ENCODE measurements at regions of chr18 and their contacts with region 1.

Region 1: DNA sequence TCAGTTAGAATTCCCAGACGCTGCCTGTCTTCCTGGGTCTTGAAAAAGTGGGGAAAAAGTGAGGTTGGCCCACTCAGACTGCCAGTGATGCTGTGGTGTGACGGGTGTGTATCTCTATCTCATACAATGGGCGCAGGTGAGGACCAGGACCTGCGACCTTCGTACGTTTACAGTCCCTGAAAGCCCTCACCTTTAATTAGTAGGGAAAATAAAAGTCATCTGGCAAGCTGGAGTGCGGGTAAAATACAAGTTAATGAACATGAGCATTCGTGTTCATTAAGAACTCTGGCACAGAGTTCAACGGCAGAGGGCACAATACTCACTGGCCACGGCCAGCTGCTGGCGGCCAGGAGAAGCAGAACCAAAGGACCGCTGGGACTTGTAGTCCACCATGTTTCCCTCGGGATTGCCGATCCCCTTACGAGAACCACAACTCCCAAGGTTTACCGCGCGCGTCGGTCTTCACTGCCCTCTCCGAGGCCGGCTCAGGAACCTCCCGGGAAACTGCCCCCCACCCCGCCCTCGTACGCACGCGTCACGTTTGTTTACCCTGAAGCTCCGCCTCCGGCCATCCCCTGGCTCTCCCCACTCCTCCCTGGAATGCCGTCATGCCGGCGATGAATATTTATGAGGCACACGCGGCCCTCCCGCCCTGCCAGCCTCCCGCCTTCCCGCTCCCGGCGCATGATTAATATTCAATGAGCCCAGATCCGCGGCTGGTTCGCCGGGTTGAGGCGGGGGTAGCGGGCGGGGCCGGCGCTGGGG is 488 bp upstream of the PHLPP1 start:
- DNase-seq: peak; percentile 100
- H3K4me3 ChIP-seq: peak overlapping the region; percentile 68 to 78 (median 73)
- H3K4me3 Mint-ChIP-seq: peak overlapping the region; percentile 78 to 84
- H3K27ac ChIP-seq: peak overlapping the region; percentile 70 to 71
- H3K27ac Mint-ChIP-seq: peak overlapping the region; percentile 76 to 97 (median 91)
- H3K4me1 ChIP-seq: peaks cover 15 to 36% of the 10 kb centered on the region in 2 donors
- H3K4me1 Mint-ChIP-seq: peaks cover 33% of the 10 kb centered on the region
- H3K27me3 ChIP-seq: no peaks in the 10 kb centered on the region
- H3K27me3 Mint-ChIP-seq: peaks cover 0 to 5% (median 1%) of the 10 kb centered on the region in 3 donors
- CTCF ChIP-seq: peak; percentile 63

Region 2: DNA sequence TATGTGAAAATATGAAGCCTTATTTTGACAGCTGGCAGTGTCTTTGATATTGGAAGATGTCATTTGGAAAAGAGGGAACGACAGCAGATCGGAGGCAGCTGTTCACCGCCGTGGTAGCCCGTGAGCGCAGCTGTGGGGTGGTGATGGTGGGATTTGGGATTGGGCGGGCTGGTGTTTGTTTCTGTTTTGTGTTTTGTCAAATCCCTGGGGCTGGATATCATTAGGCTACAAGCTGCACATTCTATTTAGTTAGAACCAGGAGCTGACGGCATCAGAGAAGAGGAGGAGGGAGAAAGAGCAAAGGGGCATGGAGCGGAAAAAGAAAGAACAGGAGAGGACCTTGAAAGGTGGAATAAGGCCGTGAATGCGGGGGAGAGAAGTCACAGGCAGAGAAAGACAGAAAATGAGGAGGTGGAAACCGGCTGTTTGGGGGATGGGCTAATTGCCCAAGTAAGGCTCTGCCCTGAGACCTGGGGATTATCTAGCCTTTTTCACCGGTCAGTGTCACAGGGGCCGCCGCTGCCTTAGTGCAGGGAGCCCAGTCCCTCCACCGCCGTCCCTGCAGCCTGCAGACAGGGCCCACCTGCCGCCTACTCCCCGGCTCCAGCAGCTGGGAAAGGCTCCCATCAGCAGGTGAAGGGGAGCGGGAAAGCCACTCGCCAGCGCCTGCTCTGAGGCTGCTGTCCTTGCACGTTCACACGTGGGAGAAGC is 104.0 kb before region 1 on chr18:
- intact Hi-C with region 1: no loop called
- DNase-seq: no peak
- H3K4me3 ChIP-seq: no peak overlapping the region
- H3K4me3 Mint-ChIP-seq: peak overlapping the region in 1 of 2 donors; percentile 47
- H3K27ac ChIP-seq: no peak overlapping the region
- H3K27ac Mint-ChIP-seq: peak overlapping the region in 1 of 7 donors; percentile 8
- H3K4me1 ChIP-seq: peaks cover 0 to 8% of the 10 kb centered on the region in 2 donors
- H3K4me1 Mint-ChIP-seq: peaks cover 25% of the 10 kb centered on the region
- H3K27me3 ChIP-seq: peaks cover 0 to 21% of the 10 kb centered on the region in 2 donors
- H3K27me3 Mint-ChIP-seq: peaks cover 6 to 26% (median 10%) of the 10 kb centered on the region in 3 donors
- CTCF ChIP-seq: no peak

Region 3: DNA sequence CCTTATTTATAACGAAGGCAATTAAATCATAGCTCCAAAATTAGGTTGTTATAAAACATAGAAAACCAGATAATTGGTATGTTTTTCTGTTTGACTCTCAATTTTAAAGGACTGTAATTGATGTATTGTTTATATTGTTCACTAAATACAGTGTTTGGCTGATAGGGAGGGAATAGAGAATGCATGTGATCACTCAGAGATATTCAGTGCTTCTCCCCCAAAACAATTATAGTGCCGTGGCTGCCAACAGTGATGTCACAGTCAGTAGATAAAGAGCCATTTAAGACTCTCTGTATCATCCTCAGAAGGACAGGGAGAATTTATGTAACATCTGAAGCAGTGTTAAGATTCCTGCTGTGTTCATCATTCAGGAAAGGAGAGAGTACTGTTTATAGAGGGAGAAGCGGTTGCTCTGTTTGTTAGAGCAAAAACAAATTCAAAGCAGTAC is 70.1 kb after region 1 on chr18:
- intact Hi-C with region 1: loop called in 1 of 2 experiments (anchors 10 kb)
- DNase-seq: no peak
- H3K4me3 ChIP-seq: no peak overlapping the region
- H3K4me3 Mint-ChIP-seq: no peak overlapping the region
- H3K27ac ChIP-seq: peak overlapping the region in 1 of 2 donors; percentile 71
- H3K27ac Mint-ChIP-seq: peak overlapping the region in 6 of 7 donors; percentile 4 to 71 (median 38)
- H3K4me1 ChIP-seq: peaks cover 16 to 29% of the 10 kb centered on the region in 2 donors
- H3K4me1 Mint-ChIP-seq: peaks cover 30% of the 10 kb centered on the region
- H3K27me3 ChIP-seq: no peaks in the 10 kb centered on the region
- H3K27me3 Mint-ChIP-seq: peaks cover 0 to 2% (median 0%) of the 10 kb centered on the region in 3 donors
- CTCF ChIP-seq: no peak

Region 4: GRCh38 chr18:62963507-62963906 is 248.7 kb after region 1 on chr18:
- intact Hi-C with region 1: loop called (anchors 5 kb)
- DNase-seq: no peak
- H3K4me3 ChIP-seq: no peak overlapping the region
- H3K4me3 Mint-ChIP-seq: no peak overlapping the region
- H3K27ac ChIP-seq: no peak overlapping the region
- H3K27ac Mint-ChIP-seq: no peak overlapping the region
- H3K4me1 ChIP-seq: no peaks in the 10 kb centered on the region
- H3K4me1 Mint-ChIP-seq: no peaks in the 10 kb centered on the region
- H3K27me3 ChIP-seq: no peaks in the 10 kb centered on the region
- H3K27me3 Mint-ChIP-seq: no peaks in the 10 kb centered on the region
- CTCF ChIP-seq: no peak

Region 5: GRCh38 chr18:63422087-63422809 is 707.4 kb after region 1 on chr18 and contains the start of gene VPS4B:
- intact Hi-C with region 1: loop called in 1 of 2 experiments (anchors 10 kb)
- DNase-seq: peak; percentile 100
- H3K4me3 ChIP-seq: peak within 1 kb of the TSS; percentile 85 to 94 (median 91)
- H3K4me3 Mint-ChIP-seq: peak within 1 kb of the TSS; percentile 97 to 98
- H3K27ac ChIP-seq: peak within 1 kb of the TSS; percentile 88 to 98
- H3K27ac Mint-ChIP-seq: peak within 1 kb of the TSS; percentile 97 to 99 (median 99)
- H3K4me1 ChIP-seq: peaks cover 16 to 23% of the 10 kb centered on the region in 2 donors
- H3K4me1 Mint-ChIP-seq: peaks cover 18% of the 10 kb centered on the region
- H3K27me3 ChIP-seq: no peaks in the 10 kb centered on the region
- H3K27me3 Mint-ChIP-seq: peaks cover 0 to 6% (median 0%) of the 10 kb centered on the region in 3 donors
- CTCF ChIP-seq: no peak
- polyA plus RNA-seq, gene VPS4B: 15.4 to 48.8 (median 26.7) TPM

Region 6: DNA sequence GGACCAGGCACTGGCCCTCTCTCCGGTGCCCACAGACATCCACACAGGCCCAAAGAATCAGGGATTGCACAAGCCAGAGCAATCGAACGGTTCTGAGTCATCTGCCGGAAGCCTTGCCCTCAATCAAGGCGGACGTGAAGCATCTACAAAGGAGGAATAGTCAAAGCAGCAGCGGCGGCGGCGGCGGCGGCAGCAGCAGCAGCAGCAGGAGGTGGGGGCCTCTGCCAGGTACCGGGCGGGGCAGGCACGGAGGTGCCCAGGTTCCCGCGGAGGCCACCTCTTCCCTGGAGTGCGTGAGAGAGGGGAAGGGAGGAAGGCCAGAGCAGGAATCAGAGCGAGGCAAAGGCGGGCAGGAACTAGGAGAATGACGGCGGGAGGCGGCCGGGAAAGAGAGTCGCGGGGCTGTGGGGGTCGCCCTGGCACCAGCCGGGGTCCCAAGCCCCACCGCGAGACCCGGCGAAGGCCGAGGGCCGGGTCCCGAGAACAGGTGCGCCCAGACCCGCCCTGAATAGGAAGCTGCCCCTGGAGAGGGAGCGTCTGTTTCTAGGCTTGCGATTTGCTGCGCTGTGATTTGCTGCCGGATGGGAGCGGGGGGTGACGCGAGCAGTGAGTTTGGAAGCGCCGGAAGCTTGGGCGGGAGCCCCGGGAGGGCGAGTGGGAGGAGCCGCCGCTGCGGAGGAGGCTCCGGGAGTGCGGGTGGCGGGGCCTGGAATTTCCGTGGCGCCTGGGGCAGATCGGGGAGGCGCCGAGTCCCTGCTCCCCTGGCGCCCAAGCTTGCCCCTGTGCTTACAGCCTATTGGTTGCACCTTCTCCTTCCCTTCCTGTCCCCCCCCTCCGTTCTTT is 1255.3 kb after region 1 on chr18 and contains the start of gene SERPINB8:
- intact Hi-C with region 1: loop called in 1 of 2 experiments (anchors 10 kb)
- DNase-seq: peak; percentile 92 to 97 (median 96)
- H3K4me3 ChIP-seq: peak within 1 kb of the TSS; percentile 55 to 94 (median 81)
- H3K4me3 Mint-ChIP-seq: peak within 1 kb of the TSS; percentile 91 to 98
- H3K27ac ChIP-seq: peak within 1 kb of the TSS; percentile 95 to 98
- H3K27ac Mint-ChIP-seq: peak within 1 kb of the TSS; percentile 95 to 99 (median 98)
- H3K4me1 ChIP-seq: peaks cover 64 to 67% of the 10 kb centered on the region in 2 donors
- H3K4me1 Mint-ChIP-seq: peaks cover 82% of the 10 kb centered on the region
- H3K27me3 ChIP-seq: no peaks in the 10 kb centered on the region
- H3K27me3 Mint-ChIP-seq: peaks cover 0 to 2% (median 0%) of the 10 kb centered on the region in 3 donors
- CTCF ChIP-seq: no peak
- polyA plus RNA-seq, gene SERPINB8: 30.3 to 141 (median 115) TPM